ENCODE measurements at regions of chr5 and their contacts with region 1.

Region 1: DNA sequence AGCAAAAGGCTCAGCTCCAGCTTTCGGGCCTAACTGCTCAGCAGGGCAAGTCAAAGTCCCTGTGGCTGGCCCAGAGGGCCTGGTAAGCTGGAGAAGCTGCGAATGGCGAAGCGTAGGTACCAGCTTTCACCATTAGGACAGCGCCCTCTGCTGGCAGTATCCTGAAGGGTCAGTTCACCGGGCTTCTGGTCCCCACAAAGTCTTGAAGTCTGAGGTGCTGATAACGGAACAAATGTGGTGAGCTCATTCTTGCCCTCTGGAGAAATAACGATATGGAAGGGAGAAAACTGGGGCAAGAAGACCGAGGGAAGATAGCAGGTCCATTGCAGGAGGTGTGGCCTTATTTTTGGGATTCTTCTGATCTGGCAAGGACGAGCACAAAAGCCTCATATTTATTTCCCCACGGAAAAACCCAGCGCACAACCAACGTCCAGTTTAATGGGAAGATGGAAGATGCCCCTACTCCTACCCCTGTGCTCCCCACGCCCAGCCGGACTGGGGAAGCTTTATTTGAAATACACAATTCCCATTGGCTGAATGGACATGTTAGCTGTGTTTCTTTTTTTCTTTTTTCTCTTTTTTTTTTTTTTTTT is 7.2 kb downstream of the SOWAHA start:
- DNase-seq: peak; percentile 97
- ATAC-seq: peak; percentile 83
- H3K4me3 Mint-ChIP-seq: no peak overlapping the region
- H3K27ac Mint-ChIP-seq: no peak overlapping the region
- H3K4me1 Mint-ChIP-seq: peaks cover 10% of the 10 kb centered on the region
- H3K27me3 Mint-ChIP-seq: peaks cover 38% of the 10 kb centered on the region
- CTCF ChIP-seq: peak; percentile 89

Region 2: DNA sequence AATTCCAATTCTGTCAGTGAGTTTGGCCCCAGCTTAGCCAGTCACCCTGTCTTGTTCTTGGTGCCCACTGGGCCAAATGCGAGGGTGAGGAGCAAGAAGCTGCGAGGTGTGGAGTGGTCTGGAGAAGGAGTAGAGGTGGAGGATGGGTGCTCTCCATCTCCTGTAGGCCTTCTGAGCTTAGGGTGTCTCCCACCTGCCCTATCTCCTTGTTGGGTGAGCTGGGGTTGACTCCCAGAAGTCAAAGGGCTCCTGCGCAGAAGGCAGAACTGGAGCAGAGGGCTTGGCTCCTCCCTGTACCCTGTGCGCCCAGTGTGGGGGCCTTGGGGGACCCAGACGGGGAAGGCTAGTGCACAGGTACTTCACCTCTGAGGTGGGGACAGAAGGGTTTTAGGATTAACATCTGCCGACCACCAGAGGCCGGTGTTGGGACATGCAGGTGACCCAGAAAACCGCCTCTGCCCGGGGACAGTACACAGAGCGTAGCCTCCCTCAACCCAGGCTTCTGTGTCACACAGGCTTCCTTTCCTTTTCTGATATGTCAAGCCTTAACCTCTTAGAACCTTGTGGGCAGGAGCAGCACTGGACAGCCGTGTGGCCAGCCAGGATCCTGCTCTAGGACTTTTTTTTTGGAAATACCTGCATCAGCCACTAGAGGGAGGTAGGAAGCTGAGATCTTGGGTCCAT is 293.8 kb before region 1 on chr5:
- CTCF ChIA-PET with region 1: interaction called, 62 read pairs
- POLR2A ChIA-PET with region 1: no interaction called
- intact Hi-C with region 1: loop called (anchors 1 kb)
- DNase-seq: peak; percentile 57
- ATAC-seq: peak; percentile 57
- H3K4me3 Mint-ChIP-seq: no peak overlapping the region
- H3K27ac Mint-ChIP-seq: peak overlapping the region; percentile 51
- H3K4me1 Mint-ChIP-seq: peaks cover 42% of the 10 kb centered on the region
- H3K27me3 Mint-ChIP-seq: peaks cover 2% of the 10 kb centered on the region
- CTCF ChIP-seq: peak; percentile 98

Region 3: GRCh38 chr5:132674671-132675506 is 145.4 kb before region 1 on chr5:
- CTCF ChIA-PET with region 1: no interaction called
- POLR2A ChIA-PET with region 1: no interaction called
- intact Hi-C with region 1: no loop called
- DNase-seq: peak; percentile 23
- ATAC-seq: peak; percentile 63
- H3K4me3 Mint-ChIP-seq: no peak overlapping the region
- H3K27ac Mint-ChIP-seq: peak overlapping the region; percentile 84
- H3K4me1 Mint-ChIP-seq: peaks cover 28% of the 10 kb centered on the region
- H3K27me3 Mint-ChIP-seq: no peaks in the 10 kb centered on the region
- CTCF ChIP-seq: no peak

Region 4: GRCh38 chr5:132736853-132737833 is 83.1 kb before region 1 on chr5 and contains the start of gene KIF3A:
- CTCF ChIA-PET with region 1: interaction called, 29 read pairs
- POLR2A ChIA-PET with region 1: no interaction called
- intact Hi-C with region 1: no loop called
- DNase-seq: peak; percentile 99
- ATAC-seq: peak; percentile 94
- H3K4me3 Mint-ChIP-seq: peak within 1 kb of the TSS; percentile 83
- H3K27ac Mint-ChIP-seq: peak within 1 kb of the TSS; percentile 76
- H3K4me1 Mint-ChIP-seq: peaks cover 28% of the 10 kb centered on the region
- H3K27me3 Mint-ChIP-seq: no peaks in the 10 kb centered on the region
- CTCF ChIP-seq: no peak
- total RNA-seq, gene KIF3A: 16.4 to 17.0 TPM

Region 5: GRCh38 chr5:132777209-132778069 is 42.8 kb before region 1 on chr5 and contains the start of gene SEPTIN8:
- CTCF ChIA-PET with region 1: interaction called, 12 read pairs
- POLR2A ChIA-PET with region 1: no interaction called
- intact Hi-C with region 1: no loop called
- DNase-seq: peak; percentile 52
- ATAC-seq: peak; percentile 74
- H3K4me3 Mint-ChIP-seq: peak within 1 kb of the TSS; percentile 67
- H3K27ac Mint-ChIP-seq: no peak within 1 kb of the TSS
- H3K4me1 Mint-ChIP-seq: peaks cover 8% of the 10 kb centered on the region
- H3K27me3 Mint-ChIP-seq: peaks cover 20% of the 10 kb centered on the region
- CTCF ChIP-seq: no peak
- total RNA-seq, gene SEPTIN8: 25.2 to 27.1 TPM

Region 6: DNA sequence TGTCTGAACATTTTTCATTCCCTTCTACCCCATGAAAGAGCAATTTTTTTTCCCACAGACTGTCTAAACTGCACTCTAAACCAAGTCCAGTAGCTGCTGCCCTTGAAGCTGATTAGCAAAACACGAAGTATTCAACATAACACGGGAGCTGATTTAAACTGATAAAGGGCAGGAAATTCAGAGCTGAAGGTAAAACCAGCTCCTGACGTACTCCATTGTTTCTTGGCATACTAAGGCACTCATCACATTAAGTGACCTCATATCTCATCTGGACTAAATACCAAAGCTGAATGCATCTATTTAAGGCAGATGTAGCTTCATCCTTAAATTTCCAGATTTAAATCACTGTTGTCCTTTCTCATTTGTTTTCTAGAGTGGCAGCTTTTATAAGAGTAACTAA is 34.0 kb after region 1 on chr5:
- CTCF ChIA-PET with region 1: interaction called, 13 read pairs
- POLR2A ChIA-PET with region 1: no interaction called
- intact Hi-C with region 1: no loop called
- DNase-seq: no peak
- ATAC-seq: no peak
- H3K4me3 Mint-ChIP-seq: no peak overlapping the region
- H3K27ac Mint-ChIP-seq: no peak overlapping the region
- H3K4me1 Mint-ChIP-seq: peaks cover 1% of the 10 kb centered on the region
- H3K27me3 Mint-ChIP-seq: peaks cover 10% of the 10 kb centered on the region
- CTCF ChIP-seq: no peak

Measured in activated CD8-positive, alpha-beta T cell treated with anti-CD3 and anti-CD28 coated beads for 36 hours (primary cell).